ENCODE measurements at regions of chr9 and their contacts with region 1.

Region 1: GRCh38 chr9:112379177-112380101 is 469 bp upstream of the HSDL2 start:
- DNase-seq: peak; percentile 99
- ATAC-seq: peak; percentile 94
- H3K4me3 Mint-ChIP-seq: peak overlapping the region; percentile 99
- H3K27ac Mint-ChIP-seq: peak overlapping the region; percentile 97
- H3K4me1 Mint-ChIP-seq: peaks cover 50% of the 10 kb centered on the region
- H3K27me3 Mint-ChIP-seq: no peaks in the 10 kb centered on the region

Region 2: GRCh38 chr9:112061152-112061740 is 318.2 kb before region 1 on chr9:
- CTCF ChIA-PET with region 1: no interaction called
- POLR2A ChIA-PET with region 1: no interaction called
- DNase-seq: peak; percentile 67
- ATAC-seq: peak; percentile 86
- H3K4me3 Mint-ChIP-seq: no peak overlapping the region
- H3K27ac Mint-ChIP-seq: peak overlapping the region; percentile 77
- H3K4me1 Mint-ChIP-seq: peaks cover 36% of the 10 kb centered on the region
- H3K27me3 Mint-ChIP-seq: no peaks in the 10 kb centered on the region

Region 3: GRCh38 chr9:112097712-112098688 is 281.4 kb before region 1 on chr9:
- CTCF ChIA-PET with region 1: interaction called, 10 read pairs
- POLR2A ChIA-PET with region 1: interaction called, 10 read pairs
- DNase-seq: peak; percentile 81
- ATAC-seq: peak; percentile 91
- H3K4me3 Mint-ChIP-seq: no peak overlapping the region
- H3K27ac Mint-ChIP-seq: no peak overlapping the region
- H3K4me1 Mint-ChIP-seq: peaks cover 32% of the 10 kb centered on the region
- H3K27me3 Mint-ChIP-seq: no peaks in the 10 kb centered on the region

Region 4: DNA sequence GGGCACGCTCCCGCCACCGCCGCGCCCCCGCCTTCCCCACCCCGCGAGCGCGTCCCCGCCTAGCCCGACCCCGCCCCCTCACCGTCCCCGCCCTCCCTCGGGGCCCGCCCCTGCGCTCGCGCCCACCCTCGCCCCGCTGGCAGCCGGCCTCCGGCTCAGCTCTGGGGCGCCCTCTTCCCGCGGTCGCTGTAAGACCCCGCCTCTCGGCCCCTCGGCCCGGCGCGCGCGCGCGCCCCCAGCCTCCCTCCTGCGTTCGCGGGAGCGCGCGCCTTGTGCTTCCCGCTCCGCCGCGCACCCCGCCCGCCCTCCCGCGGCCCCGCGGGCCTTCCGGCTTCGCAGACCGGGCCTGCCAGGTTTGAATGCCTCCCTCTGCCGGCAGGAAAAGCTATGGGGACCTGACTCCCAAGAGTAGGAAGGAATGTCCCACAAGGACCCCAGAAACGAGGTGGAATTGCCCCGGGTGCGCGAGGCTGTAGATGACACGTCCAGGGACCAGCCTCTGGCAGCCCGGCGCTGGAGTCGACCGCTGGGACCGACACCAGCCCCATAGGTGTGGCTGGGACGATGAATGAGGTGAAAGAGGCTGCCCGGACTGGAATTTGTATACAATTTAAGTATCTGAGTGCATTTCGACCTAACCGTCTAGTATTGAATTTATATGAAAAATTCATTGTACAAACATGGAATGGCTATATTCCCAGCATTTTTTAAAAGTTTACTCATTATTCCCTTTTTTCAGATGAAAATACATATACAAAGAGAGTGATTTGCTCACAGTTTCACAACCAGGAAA is 45.6 kb before region 1 on chr9:
- CTCF ChIA-PET with region 1: interaction called, 5 read pairs
- POLR2A ChIA-PET with region 1: interaction called, 26 read pairs
- DNase-seq: peak; percentile 95
- ATAC-seq: peak; percentile 85
- H3K4me3 Mint-ChIP-seq: peak overlapping the region; percentile 93
- H3K27ac Mint-ChIP-seq: peak overlapping the region; percentile 99
- H3K4me1 Mint-ChIP-seq: peaks cover 35% of the 10 kb centered on the region
- H3K27me3 Mint-ChIP-seq: peaks cover 5% of the 10 kb centered on the region

Region 5: DNA sequence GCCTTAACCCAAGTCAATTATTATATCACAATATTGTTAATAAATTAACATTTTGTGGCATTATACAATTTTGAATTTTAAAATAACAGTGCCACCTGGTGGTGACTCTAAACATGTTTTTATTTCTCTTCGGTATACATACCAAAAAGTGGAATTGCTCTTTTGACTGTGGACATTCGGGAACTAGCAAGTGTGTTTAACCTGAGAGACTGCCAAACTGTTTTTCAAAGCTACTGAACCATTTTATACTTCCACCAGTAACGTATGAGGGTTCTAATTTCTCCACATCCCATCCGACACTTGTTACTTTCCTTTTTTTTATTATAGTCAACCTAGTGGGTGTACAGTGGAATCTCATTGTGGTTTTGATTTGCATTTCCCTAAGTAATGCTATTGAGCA is 17.8 kb before region 1 on chr9:
- CTCF ChIA-PET with region 1: interaction called, 22 read pairs
- POLR2A ChIA-PET with region 1: interaction called, 5 read pairs
- DNase-seq: no peak
- ATAC-seq: no peak
- H3K4me3 Mint-ChIP-seq: no peak overlapping the region
- H3K27ac Mint-ChIP-seq: no peak overlapping the region
- H3K4me1 Mint-ChIP-seq: peaks cover 6% of the 10 kb centered on the region
- H3K27me3 Mint-ChIP-seq: peaks cover 18% of the 10 kb centered on the region

Region 6: DNA sequence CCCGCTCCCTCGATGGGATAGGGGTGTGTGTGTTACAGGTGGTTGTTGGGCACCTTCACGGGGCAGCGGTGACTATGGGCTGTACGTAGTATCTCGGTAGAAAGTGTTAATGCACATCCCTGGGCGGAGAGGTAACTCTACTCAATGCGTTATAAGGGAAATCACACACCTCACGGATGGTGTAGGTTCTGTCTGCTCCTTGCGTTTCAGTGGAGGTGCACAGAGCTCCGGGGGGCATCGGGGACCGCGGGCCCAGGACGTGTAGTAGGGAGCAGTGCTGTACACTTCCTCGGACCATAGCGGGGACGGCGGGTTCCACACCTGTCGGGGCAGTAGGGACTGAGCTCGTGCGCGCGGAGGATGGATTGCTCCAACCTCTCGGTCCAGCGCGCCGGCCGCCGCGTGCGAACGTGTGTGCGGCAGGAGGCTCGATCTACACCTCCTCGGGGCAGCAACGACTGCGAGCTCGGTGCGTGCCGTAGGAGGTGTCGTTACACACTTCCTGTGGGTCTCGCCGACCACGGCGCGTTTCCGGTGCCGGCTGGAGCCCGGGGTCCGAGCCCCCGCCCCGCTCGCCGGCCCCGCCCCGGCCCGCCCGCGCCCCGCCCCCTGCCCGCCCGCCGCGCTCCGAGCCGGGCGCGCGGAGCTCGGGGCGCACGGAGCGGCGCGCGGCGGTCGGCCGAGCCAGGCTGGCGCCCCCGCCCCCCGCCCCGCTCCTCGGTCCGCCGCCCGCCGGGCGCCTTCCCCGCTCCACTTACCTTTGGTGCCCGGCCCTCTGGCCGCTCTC is 107.0 kb after region 1 on chr9 and contains the start of gene KIAA1958:
- CTCF ChIA-PET with region 1: interaction called, 6 read pairs
- POLR2A ChIA-PET with region 1: interaction called, 22 read pairs
- DNase-seq: peak; percentile 92
- ATAC-seq: peak; percentile 91
- H3K4me3 Mint-ChIP-seq: peak within 1 kb of the TSS; percentile 92
- H3K27ac Mint-ChIP-seq: peak within 1 kb of the TSS; percentile 96
- H3K4me1 Mint-ChIP-seq: peaks cover 36% of the 10 kb centered on the region
- H3K27me3 Mint-ChIP-seq: no peaks in the 10 kb centered on the region
- total RNA-seq, gene KIAA1958: 11.1 to 11.5 TPM

Region 7: GRCh38 chr9:112717661-112718341 is 338.4 kb after region 1 on chr9 and contains the start of gene INIP:
- CTCF ChIA-PET with region 1: interaction called, 8 read pairs
- POLR2A ChIA-PET with region 1: interaction called, 15 read pairs
- DNase-seq: peak; percentile 99
- ATAC-seq: peak; percentile 95
- H3K4me3 Mint-ChIP-seq: peak within 1 kb of the TSS; percentile 92
- H3K27ac Mint-ChIP-seq: peak within 1 kb of the TSS; percentile 98
- H3K4me1 Mint-ChIP-seq: peaks cover 28% of the 10 kb centered on the region
- H3K27me3 Mint-ChIP-seq: no peaks in the 10 kb centered on the region
- total RNA-seq, gene INIP: 32.1 to 32.8 TPM

Region 8: DNA sequence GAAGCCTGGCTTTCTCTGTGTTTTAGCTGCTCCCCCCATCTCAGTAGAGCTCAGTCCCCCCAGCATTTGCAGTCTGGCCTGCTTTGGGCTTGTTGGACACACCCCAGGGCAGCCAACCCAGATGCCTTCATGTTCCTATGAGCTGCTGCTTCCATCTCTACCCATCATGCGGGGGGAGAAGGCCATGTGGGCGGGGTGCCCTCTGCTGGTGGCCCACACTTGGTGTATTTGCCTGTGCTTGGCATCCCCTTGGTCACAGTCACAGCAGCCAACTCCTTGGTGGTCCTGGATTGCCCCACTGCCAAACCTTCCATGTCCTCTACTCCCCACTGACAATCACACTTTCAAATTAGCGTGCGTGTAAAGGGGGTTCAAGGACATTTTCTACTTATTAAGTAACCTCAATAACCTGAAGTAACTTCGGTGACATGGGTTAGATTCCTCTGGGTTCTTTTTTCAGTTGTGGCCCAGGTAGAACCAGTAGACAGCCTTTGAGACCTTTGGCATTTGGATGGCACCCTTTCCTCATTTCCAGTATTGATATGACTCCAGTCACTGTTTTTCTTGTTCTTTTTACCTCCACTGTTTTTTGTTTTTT is 413.9 kb after region 1 on chr9:
- CTCF ChIA-PET with region 1: interaction called, 14 read pairs
- POLR2A ChIA-PET with region 1: no interaction called
- DNase-seq: peak; percentile 89
- ATAC-seq: peak; percentile 99
- H3K4me3 Mint-ChIP-seq: no peak overlapping the region
- H3K27ac Mint-ChIP-seq: no peak overlapping the region
- H3K4me1 Mint-ChIP-seq: peaks cover 6% of the 10 kb centered on the region
- H3K27me3 Mint-ChIP-seq: no peaks in the 10 kb centered on the region